CD8-positive, alpha-beta T cell (primary cell): ENCODE measurements at regions of chr11 and their contacts with region 1.

Region 1: DNA sequence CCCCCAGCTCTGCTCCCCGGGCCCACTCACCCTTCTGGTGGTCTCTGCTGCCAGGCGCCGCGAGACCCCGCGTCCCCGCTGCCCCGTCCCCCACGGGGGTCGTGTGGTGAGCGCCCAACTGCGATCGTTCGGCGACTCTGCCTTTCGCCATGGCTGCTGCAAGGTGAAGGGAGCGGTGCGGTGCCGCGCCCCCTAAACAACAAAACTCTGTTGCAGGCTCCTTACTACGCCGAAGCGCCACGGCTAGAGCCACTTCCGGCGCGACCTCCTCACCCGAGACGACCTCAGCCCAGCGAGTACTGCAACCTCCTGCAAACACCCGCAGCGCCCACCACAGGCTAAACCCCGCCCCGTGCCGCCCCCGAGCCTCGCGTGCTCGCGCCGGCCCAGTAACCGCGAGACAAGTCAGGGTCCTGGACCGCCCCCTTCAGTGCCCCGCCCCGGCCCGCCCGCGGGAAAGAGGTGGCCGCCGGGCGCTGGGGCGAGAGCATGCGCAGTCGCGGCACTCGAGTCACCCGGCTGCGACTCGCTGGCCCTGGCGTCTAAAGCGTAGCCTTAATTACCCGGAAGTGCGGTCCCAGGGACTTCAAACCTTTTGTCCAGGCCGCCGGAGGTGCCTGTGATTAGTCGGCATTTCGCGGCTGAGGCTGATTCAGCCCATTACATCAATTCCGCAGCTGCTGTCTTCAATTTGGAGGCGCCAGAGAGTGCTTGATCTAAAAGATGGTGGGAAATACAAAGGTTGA is at the start of gene TMEM41B:
- DNase-seq: peak; percentile 98 to 100 (median 100)
- ATAC-seq: peak; percentile 96
- H3K4me3 ChIP-seq: peak within 1 kb of the TSS; percentile 85 to 99
- H3K4me3 Mint-ChIP-seq: peak within 1 kb of the TSS; percentile 98
- H3K27ac ChIP-seq: peak within 1 kb of the TSS; percentile 87 to 97
- H3K27ac Mint-ChIP-seq: peak within 1 kb of the TSS; percentile 98
- H3K4me1 ChIP-seq: peaks cover 29% of the 10 kb centered on the region
- H3K4me1 Mint-ChIP-seq: peaks cover 35% of the 10 kb centered on the region
- H3K27me3 ChIP-seq: no peaks in the 10 kb centered on the region
- H3K27me3 Mint-ChIP-seq: peaks cover 2% of the 10 kb centered on the region
- CTCF ChIP-seq: no peak
- total RNA-seq, gene TMEM41B: 36.8 TPM

Region 2: GRCh38 chr11:8682303-8683114 is 632.0 kb before region 1 on chr11 and contains the starts of genes RPL27A and TRIM66:
- CTCF ChIA-PET with region 1: no interaction called
- POLR2A ChIA-PET with region 1: no interaction called
- intact Hi-C with region 1: loop called (anchors 5 to 10 kb)
- DNase-seq: peak; percentile 98 to 100 (median 99)
- ATAC-seq: peak; percentile 92
- H3K4me3 ChIP-seq: peak within 1 kb of the TSS; percentile 63 to 99
- H3K4me3 Mint-ChIP-seq: peak within 1 kb of the TSS; percentile 96
- H3K27ac ChIP-seq: peak within 1 kb of the TSS; percentile 82 to 92
- H3K27ac Mint-ChIP-seq: peak within 1 kb of the TSS; percentile 98
- H3K4me1 ChIP-seq: peaks cover 27% of the 10 kb centered on the region
- H3K4me1 Mint-ChIP-seq: peaks cover 48% of the 10 kb centered on the region
- H3K27me3 ChIP-seq: no peaks in the 10 kb centered on the region
- H3K27me3 Mint-ChIP-seq: no peaks in the 10 kb centered on the region
- CTCF ChIP-seq: no peak
- total RNA-seq, gene RPL27A: 1,595 to 1,676 TPM
- total RNA-seq, gene TRIM66: 8.6 to 9.1 TPM

Region 3: DNA sequence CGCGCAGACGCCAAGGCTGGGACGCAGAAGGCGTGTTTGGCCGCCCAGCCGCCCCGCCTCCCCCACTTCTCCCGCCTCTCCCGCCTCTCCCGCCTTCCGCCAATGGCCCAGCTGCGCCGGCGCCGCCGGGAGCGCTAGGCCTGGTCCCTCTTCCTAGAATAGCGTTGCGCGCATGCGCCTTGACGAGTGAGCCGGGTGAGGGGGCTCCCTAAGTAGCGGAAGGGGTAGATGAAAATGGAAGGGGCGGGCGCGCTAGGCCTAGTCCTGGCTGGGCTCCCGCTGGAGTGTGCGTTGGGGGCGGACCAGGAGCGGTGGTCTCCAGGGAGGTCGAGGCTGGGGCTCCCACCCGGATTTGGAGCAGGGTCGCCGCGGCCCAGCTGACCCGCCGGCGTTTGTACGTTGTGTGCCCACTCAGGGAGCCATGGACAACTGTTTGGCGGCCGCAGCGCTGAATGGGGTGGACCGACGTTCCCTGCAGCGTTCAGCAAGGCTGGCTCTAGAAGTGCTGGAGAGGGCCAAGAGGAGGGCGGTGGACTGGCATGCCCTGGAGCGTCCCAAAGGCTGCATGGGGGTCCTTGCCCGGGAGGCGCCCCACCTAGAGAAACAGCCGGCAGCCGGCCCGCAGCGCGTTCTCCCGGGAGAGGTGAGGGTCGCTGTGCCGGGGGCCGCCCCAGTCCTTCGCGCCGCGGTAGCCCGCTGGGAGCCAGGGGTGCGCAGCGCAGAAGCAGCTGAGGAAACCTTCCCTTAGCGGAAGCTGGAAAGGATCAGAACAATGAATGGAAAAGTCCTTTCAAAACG is 403.2 kb before region 1 on chr11 and contains the start of gene AKIP1:
- CTCF ChIA-PET with region 1: no interaction called
- POLR2A ChIA-PET with region 1: no interaction called
- intact Hi-C with region 1: loop called in 1 of 2 experiments (anchors 10 kb)
- DNase-seq: peak; percentile 37 to 93 (median 83)
- ATAC-seq: peak; percentile 77
- H3K4me3 ChIP-seq: peak within 1 kb of the TSS; percentile 76 to 94
- H3K4me3 Mint-ChIP-seq: peak within 1 kb of the TSS; percentile 91
- H3K27ac ChIP-seq: peak within 1 kb of the TSS; percentile 51 to 78
- H3K27ac Mint-ChIP-seq: peak within 1 kb of the TSS; percentile 90
- H3K4me1 ChIP-seq: peaks cover 23% of the 10 kb centered on the region
- H3K4me1 Mint-ChIP-seq: peaks cover 37% of the 10 kb centered on the region
- H3K27me3 ChIP-seq: no peaks in the 10 kb centered on the region
- H3K27me3 Mint-ChIP-seq: no peaks in the 10 kb centered on the region
- CTCF ChIP-seq: no peak
- total RNA-seq, gene AKIP1: 3.9 to 4.2 TPM

Region 4: DNA sequence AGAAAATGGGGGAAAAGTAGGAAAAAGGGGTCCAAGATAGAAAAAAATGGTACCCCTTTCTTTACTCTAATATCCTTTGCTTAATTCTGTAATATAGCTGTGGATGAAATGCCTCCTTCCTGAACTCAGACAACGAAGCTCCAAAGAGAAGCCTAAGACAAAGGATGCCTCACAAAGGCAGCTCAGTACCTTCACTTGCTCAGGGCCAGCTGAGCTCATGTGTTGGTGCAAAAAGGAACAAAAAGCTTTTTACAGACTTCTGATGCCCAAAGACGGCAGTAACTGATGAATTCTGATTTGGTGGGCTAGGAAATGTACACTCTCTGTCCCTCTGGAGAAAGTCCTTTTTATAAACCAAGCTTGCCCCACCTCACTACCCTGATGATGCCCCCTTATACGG is 126.8 kb before region 1 on chr11:
- CTCF ChIA-PET with region 1: no interaction called
- POLR2A ChIA-PET with region 1: no interaction called
- intact Hi-C with region 1: no loop called
- DNase-seq: no peak
- ATAC-seq: no peak
- H3K4me3 ChIP-seq: no peak overlapping the region
- H3K4me3 Mint-ChIP-seq: no peak overlapping the region
- H3K27ac ChIP-seq: no peak overlapping the region
- H3K27ac Mint-ChIP-seq: no peak overlapping the region
- H3K4me1 ChIP-seq: no peaks in the 10 kb centered on the region
- H3K4me1 Mint-ChIP-seq: no peaks in the 10 kb centered on the region
- H3K27me3 ChIP-seq: no peaks in the 10 kb centered on the region
- H3K27me3 Mint-ChIP-seq: no peaks in the 10 kb centered on the region
- CTCF ChIP-seq: no peak

Region 5: GRCh38 chr11:9250139-9250582 is 64.3 kb before region 1 on chr11:
- CTCF ChIA-PET with region 1: no interaction called
- POLR2A ChIA-PET with region 1: interaction called, 3 read pairs
- intact Hi-C with region 1: loop called in 1 of 2 experiments (anchors 2 kb)
- DNase-seq: peak in 5 of 9 experiments; percentile 46 to 85 (median 55)
- ATAC-seq: peak; percentile 87
- H3K4me3 ChIP-seq: peak overlapping the region in 1 of 2 experiments; percentile 26
- H3K4me3 Mint-ChIP-seq: peak overlapping the region; percentile 66
- H3K27ac ChIP-seq: peak overlapping the region in 1 of 2 experiments; percentile 7
- H3K27ac Mint-ChIP-seq: peak overlapping the region; percentile 81
- H3K4me1 ChIP-seq: peaks cover 71% of the 10 kb centered on the region
- H3K4me1 Mint-ChIP-seq: peaks cover 64% of the 10 kb centered on the region
- H3K27me3 ChIP-seq: no peaks in the 10 kb centered on the region
- H3K27me3 Mint-ChIP-seq: no peaks in the 10 kb centered on the region
- CTCF ChIP-seq: no peak

Region 6: DNA sequence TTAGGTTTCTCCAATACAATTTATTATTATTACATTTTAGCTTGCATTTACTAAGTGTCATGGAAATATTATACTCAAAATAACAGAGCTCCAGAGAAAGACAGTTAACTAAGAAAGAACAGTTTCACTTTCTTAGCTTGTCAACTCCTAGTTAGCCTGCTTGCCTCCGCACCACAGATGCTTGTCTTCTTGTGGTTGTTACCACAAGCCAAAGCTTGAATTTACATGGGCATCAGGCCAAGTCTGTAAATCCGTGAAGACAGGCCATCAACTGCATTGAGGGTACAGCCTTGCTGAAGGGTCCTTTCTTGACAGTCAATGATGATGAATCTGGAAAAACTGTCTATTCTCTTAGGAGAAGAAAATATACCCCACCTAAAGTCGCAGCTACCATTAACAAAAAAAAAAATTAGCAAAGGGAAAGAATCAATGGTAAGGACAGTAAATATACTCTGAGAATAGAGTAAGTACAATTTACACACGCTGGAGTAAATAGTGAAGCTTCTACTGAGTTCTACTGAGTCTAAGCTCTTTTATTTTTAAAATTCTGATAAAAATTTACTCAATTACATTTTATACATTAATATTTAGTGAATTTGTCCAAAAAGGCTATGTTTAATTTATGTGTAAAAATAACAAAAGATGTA is 33.7 kb before region 1 on chr11:
- CTCF ChIA-PET with region 1: no interaction called
- POLR2A ChIA-PET with region 1: interaction called, 5 read pairs
- intact Hi-C with region 1: loop called in 1 of 2 experiments (anchors 2 kb)
- DNase-seq: peak in 8 of 9 experiments; percentile 29 to 85 (median 60)
- ATAC-seq: peak; percentile 87
- H3K4me3 ChIP-seq: peak overlapping the region in 1 of 2 experiments; percentile 17
- H3K4me3 Mint-ChIP-seq: peak overlapping the region; percentile 54
- H3K27ac ChIP-seq: no peak overlapping the region
- H3K27ac Mint-ChIP-seq: peak overlapping the region; percentile 66
- H3K4me1 ChIP-seq: peaks cover 18% of the 10 kb centered on the region
- H3K4me1 Mint-ChIP-seq: peaks cover 24% of the 10 kb centered on the region
- H3K27me3 ChIP-seq: no peaks in the 10 kb centered on the region
- H3K27me3 Mint-ChIP-seq: no peaks in the 10 kb centered on the region
- CTCF ChIP-seq: no peak

Region 7: GRCh38 chr11:9384535-9385303 is 70.3 kb after region 1 on chr11 and contains the start of gene IPO7:
- CTCF ChIA-PET with region 1: interaction called, 8 read pairs
- POLR2A ChIA-PET with region 1: interaction called, 15 read pairs
- intact Hi-C with region 1: loop called (anchors 1 kb)
- DNase-seq: peak; percentile 73 to 92 (median 87)
- ATAC-seq: peak; percentile 98
- H3K4me3 ChIP-seq: peak within 1 kb of the TSS; percentile 79 to 83
- H3K4me3 Mint-ChIP-seq: peak within 1 kb of the TSS; percentile 96
- H3K27ac ChIP-seq: peak within 1 kb of the TSS; percentile 77 to 84
- H3K27ac Mint-ChIP-seq: peak within 1 kb of the TSS; percentile 92
- H3K4me1 ChIP-seq: peaks cover 12% of the 10 kb centered on the region
- H3K4me1 Mint-ChIP-seq: peaks cover 33% of the 10 kb centered on the region
- H3K27me3 ChIP-seq: no peaks in the 10 kb centered on the region
- H3K27me3 Mint-ChIP-seq: no peaks in the 10 kb centered on the region
- CTCF ChIP-seq: no peak
- total RNA-seq, gene IPO7: 52.4 to 53.4 TPM

Region 8: DNA sequence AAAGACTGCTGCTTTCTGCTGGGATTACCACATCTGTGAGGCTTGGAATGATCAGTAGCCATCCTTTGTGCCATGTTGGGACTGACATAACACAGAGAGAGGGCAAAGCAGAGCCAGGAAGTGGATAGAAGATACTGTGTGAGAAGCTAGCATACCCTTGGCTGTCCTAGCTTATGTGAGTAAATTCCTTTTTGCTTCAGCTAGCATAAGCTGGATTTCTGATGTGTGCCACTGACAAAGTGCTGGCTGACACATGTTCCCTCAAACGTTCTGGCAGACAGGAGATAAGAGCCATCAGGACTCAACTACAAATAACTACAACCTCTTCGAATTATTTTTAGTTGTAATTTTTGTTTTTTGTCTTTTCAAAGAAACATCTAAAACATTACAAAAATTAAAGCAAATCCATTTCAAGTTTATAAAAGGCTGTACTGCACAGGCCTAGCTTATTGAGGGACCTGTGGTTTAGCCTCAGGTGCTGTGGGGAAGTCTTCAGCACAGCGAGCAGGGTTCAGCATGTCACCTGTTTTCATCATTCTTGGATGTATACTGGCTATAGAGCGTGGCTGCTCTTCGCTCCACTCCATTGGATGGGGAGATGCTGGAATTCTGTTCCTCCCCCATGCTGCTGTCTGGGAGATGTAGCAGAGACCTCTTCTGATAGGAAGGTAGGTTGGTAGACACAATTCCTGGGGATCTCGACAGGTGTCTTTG is 470.3 kb after region 1 on chr11:
- CTCF ChIA-PET with region 1: no interaction called
- POLR2A ChIA-PET with region 1: no interaction called
- intact Hi-C with region 1: no loop called
- DNase-seq: no peak
- ATAC-seq: no peak
- H3K4me3 ChIP-seq: no peak overlapping the region
- H3K4me3 Mint-ChIP-seq: no peak overlapping the region
- H3K27ac ChIP-seq: no peak overlapping the region
- H3K27ac Mint-ChIP-seq: no peak overlapping the region
- H3K4me1 ChIP-seq: no peaks in the 10 kb centered on the region
- H3K4me1 Mint-ChIP-seq: no peaks in the 10 kb centered on the region
- H3K27me3 ChIP-seq: no peaks in the 10 kb centered on the region
- H3K27me3 Mint-ChIP-seq: no peaks in the 10 kb centered on the region
- CTCF ChIP-seq: no peak

Region 9: GRCh38 chr11:9922806-9923205 is 608.3 kb after region 1 on chr11:
- CTCF ChIA-PET with region 1: no interaction called
- POLR2A ChIA-PET with region 1: no interaction called
- intact Hi-C with region 1: no loop called
- DNase-seq: no peak
- ATAC-seq: no peak
- H3K4me3 ChIP-seq: no peak overlapping the region
- H3K4me3 Mint-ChIP-seq: no peak overlapping the region
- H3K27ac ChIP-seq: no peak overlapping the region
- H3K27ac Mint-ChIP-seq: no peak overlapping the region
- H3K4me1 ChIP-seq: no peaks in the 10 kb centered on the region
- H3K4me1 Mint-ChIP-seq: no peaks in the 10 kb centered on the region
- H3K27me3 ChIP-seq: no peaks in the 10 kb centered on the region
- H3K27me3 Mint-ChIP-seq: no peaks in the 10 kb centered on the region
- CTCF ChIP-seq: no peak